CD4-positive, alpha-beta T cell (primary cell): ENCODE measurements at regions of chr18 and their contacts with region 1.

Region 1: GRCh38 chr18:5890331-5891183 is 4.8 kb downstream of the TMEM200C start:
- DNase-seq: peak in 10 of 14 experiments; percentile 1 to 65 (median 30)
- ATAC-seq: peak; percentile 71
- H3K4me3 ChIP-seq: no peak overlapping the region
- H3K4me3 Mint-ChIP-seq: no peak overlapping the region
- H3K27ac ChIP-seq: no peak overlapping the region
- H3K27ac Mint-ChIP-seq: no peak overlapping the region
- H3K4me1 ChIP-seq: peaks cover 5% of the 10 kb centered on the region
- H3K4me1 Mint-ChIP-seq: peaks cover 10% of the 10 kb centered on the region
- H3K27me3 ChIP-seq: peaks cover 37 to 75% of the 10 kb centered on the region in 2 experiments
- H3K27me3 Mint-ChIP-seq: peaks cover 73% of the 10 kb centered on the region
- CTCF ChIP-seq: peak; percentile 13

Region 2: GRCh38 chr18:5073026-5073944 is 817.3 kb before region 1 on chr18:
- CTCF ChIA-PET with region 1: no interaction called
- POLR2A ChIA-PET with region 1: no interaction called
- intact Hi-C with region 1: loop called (anchors 1 to 2 kb)
- DNase-seq: peak in 8 of 14 experiments; percentile 3 to 66 (median 20)
- ATAC-seq: peak; percentile 85
- H3K4me3 ChIP-seq: no peak overlapping the region
- H3K4me3 Mint-ChIP-seq: no peak overlapping the region
- H3K27ac ChIP-seq: no peak overlapping the region
- H3K27ac Mint-ChIP-seq: no peak overlapping the region
- H3K4me1 ChIP-seq: no peaks in the 10 kb centered on the region
- H3K4me1 Mint-ChIP-seq: no peaks in the 10 kb centered on the region
- H3K27me3 ChIP-seq: no peaks in the 10 kb centered on the region
- H3K27me3 Mint-ChIP-seq: peaks cover 4% of the 10 kb centered on the region
- CTCF ChIP-seq: peak; percentile 80

Region 3: DNA sequence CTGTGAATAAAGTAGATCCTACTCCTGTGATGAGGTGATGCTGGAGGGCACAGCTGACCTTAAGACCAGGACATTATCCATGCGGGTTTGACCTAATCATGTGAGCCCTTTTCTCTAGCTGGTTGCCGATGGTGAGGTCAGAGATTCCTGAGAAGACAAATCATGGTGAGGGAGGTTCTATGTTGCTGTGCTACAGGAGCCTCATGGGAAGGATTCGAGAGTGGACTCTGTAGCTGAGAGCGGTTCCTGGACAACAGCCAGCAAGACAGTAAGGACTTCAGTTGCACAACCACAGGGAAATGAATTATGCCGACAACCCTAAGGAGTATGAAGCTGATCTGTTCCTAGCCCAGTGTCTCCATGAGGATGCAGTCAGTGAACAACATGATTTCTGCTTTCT is 427.2 kb before region 1 on chr18:
- CTCF ChIA-PET with region 1: no interaction called
- POLR2A ChIA-PET with region 1: no interaction called
- intact Hi-C with region 1: loop called in 1 of 2 experiments (anchors 10 kb)
- DNase-seq: peak in 2 of 14 experiments; percentile 33 to 37
- ATAC-seq: no peak
- H3K4me3 ChIP-seq: no peak overlapping the region
- H3K4me3 Mint-ChIP-seq: no peak overlapping the region
- H3K27ac ChIP-seq: no peak overlapping the region
- H3K27ac Mint-ChIP-seq: no peak overlapping the region
- H3K4me1 ChIP-seq: no peaks in the 10 kb centered on the region
- H3K4me1 Mint-ChIP-seq: peaks cover 23% of the 10 kb centered on the region
- H3K27me3 ChIP-seq: no peaks in the 10 kb centered on the region
- H3K27me3 Mint-ChIP-seq: no peaks in the 10 kb centered on the region
- CTCF ChIP-seq: no peak

Region 4: DNA sequence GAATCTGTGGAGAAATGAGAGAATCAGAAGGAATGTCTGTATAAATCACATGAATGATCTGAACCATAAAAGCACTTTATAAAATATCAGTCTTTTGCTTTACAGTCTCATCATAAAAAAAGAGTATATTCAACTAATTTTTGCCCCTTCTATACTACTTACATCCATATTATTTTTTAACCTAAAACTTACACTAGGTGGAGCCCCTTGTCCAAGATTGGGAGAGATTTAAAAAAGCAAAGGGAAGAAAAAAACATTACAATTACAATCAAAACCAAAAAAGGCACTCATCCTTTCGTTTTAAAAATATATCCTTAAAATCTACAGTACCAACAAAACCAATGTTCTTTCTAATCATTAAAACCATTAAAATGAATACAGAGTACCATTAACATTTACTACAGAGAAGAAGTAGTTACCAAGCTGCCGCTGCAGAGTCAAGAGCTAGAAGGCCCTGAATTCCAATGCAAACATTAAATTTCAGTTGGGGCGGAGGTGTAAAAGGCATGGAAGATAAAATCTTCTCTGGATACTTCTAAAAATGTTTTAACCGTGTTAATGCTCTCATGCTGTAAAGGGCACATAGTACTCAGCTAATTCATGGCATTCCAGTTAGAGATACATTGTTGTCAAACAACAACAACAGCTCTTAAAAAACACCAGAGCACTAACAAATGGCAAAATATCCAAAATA is 290.0 kb before region 1 on chr18:
- CTCF ChIA-PET with region 1: no interaction called
- POLR2A ChIA-PET with region 1: no interaction called
- intact Hi-C with region 1: loop called in 1 of 2 experiments (anchors 10 kb)
- DNase-seq: no peak
- ATAC-seq: no peak
- H3K4me3 ChIP-seq: no peak overlapping the region
- H3K4me3 Mint-ChIP-seq: no peak overlapping the region
- H3K27ac ChIP-seq: no peak overlapping the region
- H3K27ac Mint-ChIP-seq: no peak overlapping the region
- H3K4me1 ChIP-seq: no peaks in the 10 kb centered on the region
- H3K4me1 Mint-ChIP-seq: no peaks in the 10 kb centered on the region
- H3K27me3 ChIP-seq: no peaks in the 10 kb centered on the region
- H3K27me3 Mint-ChIP-seq: peaks cover 20% of the 10 kb centered on the region
- CTCF ChIP-seq: no peak